ENCODE measurements at regions of chr17 and their contacts with region 1.

Region 1: DNA sequence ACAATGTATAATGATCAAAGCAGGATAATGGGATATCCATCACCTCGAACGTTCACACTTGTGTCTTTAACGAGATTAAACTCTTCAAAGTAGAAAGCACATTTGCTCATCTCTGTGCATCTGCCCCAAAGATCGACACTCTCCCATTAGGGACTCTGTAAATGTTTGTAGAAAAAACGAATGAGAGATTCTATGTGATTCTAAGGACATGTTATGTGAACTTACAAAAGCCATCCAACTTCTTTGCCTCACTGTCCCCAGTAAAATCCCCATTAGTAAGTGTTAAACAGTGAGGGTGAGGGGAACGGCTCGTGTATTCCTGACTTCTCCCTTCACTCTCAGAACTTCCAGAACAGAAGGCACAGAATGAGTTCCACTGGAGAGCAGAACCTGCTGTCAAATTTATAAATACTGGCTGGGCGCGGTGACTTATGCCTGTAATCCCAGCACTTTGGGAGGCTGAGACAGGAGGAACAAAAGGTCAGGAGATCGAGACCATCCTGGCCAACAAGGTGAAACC is 134.1 kb downstream of the WSCD1 start:
- DNase-seq: no peak
- ATAC-seq: no peak
- H3K4me3 ChIP-seq: no peak overlapping the region
- H3K27ac ChIP-seq: no peak overlapping the region
- H3K4me1 ChIP-seq: no peaks in the 10 kb centered on the region
- H3K27me3 ChIP-seq: peaks cover 0 to 21% (median 13%) of the 10 kb centered on the region in 7 donors
- CTCF ChIP-seq: no peak

Region 2: DNA sequence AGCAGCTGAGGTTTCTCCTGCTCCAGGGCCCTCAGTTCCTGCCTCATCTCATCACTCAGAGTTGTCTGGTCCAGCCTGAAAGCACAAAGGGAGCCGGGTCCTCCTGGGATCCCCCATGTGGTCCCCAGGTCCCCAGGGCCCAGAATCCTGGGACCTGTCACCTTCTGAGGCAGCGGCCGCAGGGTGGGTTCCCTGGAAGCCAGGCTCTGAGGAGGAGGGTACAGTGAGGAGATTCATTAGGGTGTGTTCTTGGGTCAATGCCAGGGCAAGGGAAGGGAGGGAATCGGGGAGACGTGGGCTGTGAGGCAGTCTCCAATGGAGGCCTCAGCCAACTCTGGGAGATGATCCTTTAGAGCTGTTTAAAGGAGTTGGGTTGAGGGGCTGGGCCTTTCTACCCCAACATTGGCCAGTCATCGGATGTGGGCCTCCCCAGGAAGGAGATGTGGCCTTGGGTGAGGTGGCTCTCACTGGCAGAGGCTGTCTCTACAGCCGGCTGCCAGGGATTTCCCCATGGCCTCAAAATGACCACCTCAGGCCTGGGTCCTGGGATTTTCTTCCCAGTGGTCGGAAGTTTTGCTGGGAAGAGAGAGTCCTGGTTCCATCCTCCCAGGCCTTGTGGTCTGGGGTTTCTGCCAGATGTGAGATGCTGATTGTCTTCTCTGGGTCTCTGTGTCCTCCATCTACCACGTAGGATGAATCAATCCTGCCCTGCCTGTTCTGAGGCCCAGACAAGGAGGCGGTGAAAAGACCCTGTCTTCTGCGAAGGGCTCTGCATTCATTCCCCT is 667.2 kb before region 1 on chr17:
- intact Hi-C with region 1: no loop called
- DNase-seq: no peak
- ATAC-seq: peak in 1 of 8 donors; percentile 13
- H3K4me3 ChIP-seq: no peak overlapping the region
- H3K27ac ChIP-seq: peak overlapping the region in 2 of 10 donors; percentile 25 to 31
- H3K4me1 ChIP-seq: no peaks in the 10 kb centered on the region
- H3K27me3 ChIP-seq: no peaks in the 10 kb centered on the region
- CTCF ChIP-seq: no peak

Region 3: GRCh38 chr17:6145946-6146345 is 58.3 kb before region 1 on chr17:
- intact Hi-C with region 1: loop called in 1 of 10 experiments (anchors 10 kb)
- DNase-seq: no peak
- ATAC-seq: no peak
- H3K4me3 ChIP-seq: no peak overlapping the region
- H3K27ac ChIP-seq: no peak overlapping the region
- H3K4me1 ChIP-seq: no peaks in the 10 kb centered on the region
- H3K27me3 ChIP-seq: peaks cover 0 to 12% (median 0%) of the 10 kb centered on the region in 7 donors
- CTCF ChIP-seq: no peak

Measured in heart right ventricle (tissue), 16 donors.